ENCODE measurements at regions of chr20 and their contacts with region 1.

Region 1: GRCh38 chr20:19889011-19889953 is 127.9 kb upstream of the NAA20 start:
- DNase-seq: peak; percentile 78

Region 2: DNA sequence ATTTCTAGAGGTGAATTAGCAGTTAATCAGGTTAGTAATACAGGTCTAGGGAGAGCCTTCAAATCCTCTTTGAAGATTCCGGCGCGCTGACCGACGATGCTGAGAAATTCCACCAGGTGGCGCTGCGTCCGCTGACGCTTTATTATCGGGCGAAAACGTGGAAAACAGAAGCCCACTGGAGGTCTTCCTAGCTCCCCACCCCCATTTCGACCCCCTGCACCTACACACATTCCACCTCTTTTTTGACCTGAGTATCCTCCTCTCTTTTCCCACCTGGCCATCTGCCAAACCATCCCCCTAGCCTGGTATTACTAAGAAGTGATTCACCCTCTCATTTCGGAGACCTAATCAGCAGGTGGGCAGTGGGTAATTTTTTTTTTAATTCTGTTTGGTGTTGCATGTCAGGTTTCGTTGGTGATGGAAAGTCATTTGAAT is 196.6 kb before region 1 on chr20:
- intact Hi-C with region 1: loop called (anchors 10 kb)
- DNase-seq: peak; percentile 81

Region 3: GRCh38 chr20:19784511-19785172 is 104.6 kb before region 1 on chr20:
- intact Hi-C with region 1: loop called (anchors 1 kb)
- DNase-seq: peak; percentile 82

Region 4: GRCh38 chr20:19903168-19903811 is 14.0 kb after region 1 on chr20:
- intact Hi-C with region 1: no loop called
- DNase-seq: no peak

Region 5: GRCh38 chr20:19934792-19935491 is 45.7 kb after region 1 on chr20:
- intact Hi-C with region 1: loop called (anchors 2 kb)
- DNase-seq: no peak

Region 6: DNA sequence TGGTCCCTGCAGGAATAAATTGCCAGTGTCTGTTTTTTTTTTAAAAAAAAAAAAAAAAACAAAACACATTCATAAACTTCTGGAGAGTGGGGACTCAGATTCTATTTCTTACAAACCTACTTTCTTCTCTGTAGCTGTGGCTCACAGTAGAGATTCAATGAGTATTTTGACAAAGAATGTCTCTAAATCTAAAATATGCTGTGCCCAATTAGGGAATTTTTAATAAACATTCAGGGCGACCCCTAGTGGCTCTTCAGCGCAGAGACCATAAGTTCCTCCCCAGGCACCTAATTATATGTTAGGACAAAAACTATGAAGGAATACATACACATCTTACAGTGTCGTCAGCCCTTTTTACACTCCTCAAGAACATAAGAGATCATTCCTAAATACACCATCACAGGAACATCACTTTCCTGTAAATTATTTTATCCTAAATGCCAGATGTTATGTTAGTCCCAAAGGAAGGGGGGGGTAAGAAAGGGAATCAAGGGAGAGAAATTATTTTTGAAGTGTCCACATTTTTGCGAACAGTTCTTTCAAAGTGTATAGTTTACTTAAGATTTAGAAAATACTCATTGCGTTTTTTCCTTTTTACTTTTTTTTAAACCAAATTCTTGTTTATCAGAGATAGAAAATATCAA is 106.1 kb after region 1 on chr20:
- intact Hi-C with region 1: loop called (anchors 5 kb)
- DNase-seq: no peak